CD4-positive, alpha-beta memory T cell (primary cell): ENCODE measurements at regions of chr4 and their contacts with region 1.

Region 1: DNA sequence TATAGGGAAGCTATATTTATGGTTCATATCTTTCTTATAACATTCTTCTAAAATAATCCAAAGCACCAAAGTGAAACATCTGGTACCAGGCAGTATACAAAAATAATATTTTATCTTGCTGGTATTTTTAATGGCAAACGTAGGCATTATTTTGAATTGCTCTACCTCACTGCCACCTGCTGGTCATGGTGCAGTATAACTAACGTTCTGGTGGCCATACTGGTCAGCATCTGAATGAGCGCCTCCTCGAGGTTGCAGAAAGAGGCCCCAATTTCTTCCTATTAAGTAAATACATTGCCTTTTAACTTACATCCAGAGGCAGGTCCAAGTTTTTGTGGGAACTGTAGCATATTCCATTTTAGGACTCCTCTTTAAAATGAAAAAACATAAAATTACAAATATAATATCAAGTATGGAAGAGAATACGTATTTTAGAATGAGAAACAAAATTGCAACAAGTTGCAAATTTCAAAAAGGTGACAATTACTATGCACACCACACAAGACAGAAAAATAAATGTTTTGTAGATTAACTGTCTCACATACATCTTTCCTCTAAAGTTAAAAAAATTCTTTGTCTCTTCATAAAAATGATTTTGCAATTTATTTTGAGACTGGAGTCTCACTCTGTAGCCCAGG is 22.9 kb upstream of the CWH43 start:
- DNase-seq: peak; percentile 75 to 79 (median 76)
- H3K4me3 ChIP-seq: no peak overlapping the region
- H3K4me3 Mint-ChIP-seq: no peak overlapping the region
- H3K27ac ChIP-seq: no peak overlapping the region
- H3K27ac Mint-ChIP-seq: no peak overlapping the region
- H3K4me1 ChIP-seq: no peaks in the 10 kb centered on the region
- H3K4me1 Mint-ChIP-seq: no peaks in the 10 kb centered on the region
- H3K27me3 ChIP-seq: no peaks in the 10 kb centered on the region
- H3K27me3 Mint-ChIP-seq: peaks cover 1 to 4% of the 10 kb centered on the region in 2 donors

Region 2: DNA sequence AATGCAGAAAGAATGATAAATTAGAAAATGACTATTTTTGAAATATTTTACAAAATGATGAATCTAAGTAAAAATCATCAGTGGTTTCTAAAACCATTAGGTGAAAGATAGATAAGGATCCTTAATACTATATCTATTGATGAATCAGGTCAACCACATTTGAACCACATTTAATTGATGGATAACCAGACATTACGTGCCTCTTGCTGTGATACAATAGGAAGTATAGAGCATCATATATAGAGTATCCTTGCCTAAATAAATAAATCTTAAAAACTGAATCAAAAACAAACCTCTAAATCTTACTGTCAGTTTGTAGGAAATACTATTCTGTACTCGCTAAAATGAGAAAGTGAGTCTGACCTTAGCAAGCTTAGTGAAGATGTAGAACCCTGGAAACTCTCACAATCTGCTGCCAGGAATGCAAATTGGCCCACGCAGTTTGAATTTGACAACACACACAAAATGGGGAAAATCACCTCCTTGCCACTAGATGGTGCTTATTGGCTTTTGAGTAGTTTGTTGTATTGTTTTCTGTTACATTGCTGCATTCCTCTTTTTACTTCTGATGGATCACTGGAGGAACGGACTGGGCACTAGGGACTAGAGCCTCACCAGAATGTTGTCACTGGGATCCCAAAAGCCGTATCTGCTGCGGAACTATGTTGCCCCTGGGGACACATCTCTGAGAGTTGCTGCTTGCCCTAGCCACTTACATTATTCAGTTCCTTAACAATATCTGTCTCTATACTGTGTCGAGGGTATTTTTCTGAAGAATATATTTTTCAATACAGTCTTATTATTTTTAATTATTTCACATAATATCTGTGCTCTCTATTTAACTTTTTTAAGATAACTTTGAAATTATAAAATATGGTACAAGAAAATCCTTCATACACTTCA is 647.2 kb before region 1 on chr4:
- CTCF ChIA-PET with region 1: no interaction called
- POLR2A ChIA-PET with region 1: no interaction called
- intact Hi-C with region 1: loop called (anchors 1 kb)
- DNase-seq: peak; percentile 36 to 43 (median 41)
- H3K4me3 ChIP-seq: no peak overlapping the region
- H3K4me3 Mint-ChIP-seq: no peak overlapping the region
- H3K27ac ChIP-seq: no peak overlapping the region
- H3K27ac Mint-ChIP-seq: no peak overlapping the region
- H3K4me1 ChIP-seq: no peaks in the 10 kb centered on the region
- H3K4me1 Mint-ChIP-seq: no peaks in the 10 kb centered on the region
- H3K27me3 ChIP-seq: no peaks in the 10 kb centered on the region
- H3K27me3 Mint-ChIP-seq: no peaks in the 10 kb centered on the region

Region 3: GRCh38 chr4:48681856-48682255 is 281.3 kb before region 1 on chr4:
- CTCF ChIA-PET with region 1: no interaction called
- POLR2A ChIA-PET with region 1: no interaction called
- intact Hi-C with region 1: loop called (anchors 1 kb)
- DNase-seq: peak; percentile 26 to 45 (median 31)
- H3K4me3 ChIP-seq: no peak overlapping the region
- H3K4me3 Mint-ChIP-seq: peak overlapping the region in 1 of 8 donors; percentile 41
- H3K27ac ChIP-seq: no peak overlapping the region
- H3K27ac Mint-ChIP-seq: peak overlapping the region in 5 of 7 donors; percentile 19 to 78 (median 64)
- H3K4me1 ChIP-seq: peaks cover 22% of the 10 kb centered on the region
- H3K4me1 Mint-ChIP-seq: peaks cover 34 to 49% (median 38%) of the 10 kb centered on the region in 4 donors
- H3K27me3 ChIP-seq: no peaks in the 10 kb centered on the region
- H3K27me3 Mint-ChIP-seq: no peaks in the 10 kb centered on the region

Region 4: GRCh38 chr4:48830706-48831531 is 132.2 kb before region 1 on chr4 and contains the start of gene OCIAD1:
- CTCF ChIA-PET with region 1: no interaction called
- POLR2A ChIA-PET with region 1: no interaction called
- intact Hi-C with region 1: loop called (anchors 10 kb)
- DNase-seq: peak; percentile 91 to 99 (median 96)
- H3K4me3 ChIP-seq: peak within 1 kb of the TSS; percentile 92 to 100
- H3K4me3 Mint-ChIP-seq: peak within 1 kb of the TSS; percentile 100
- H3K27ac ChIP-seq: peak within 1 kb of the TSS; percentile 98
- H3K27ac Mint-ChIP-seq: peak within 1 kb of the TSS; percentile 99 to 100 (median 100)
- H3K4me1 ChIP-seq: peaks cover 25% of the 10 kb centered on the region
- H3K4me1 Mint-ChIP-seq: peaks cover 15 to 35% (median 28%) of the 10 kb centered on the region in 4 donors
- H3K27me3 ChIP-seq: no peaks in the 10 kb centered on the region
- H3K27me3 Mint-ChIP-seq: no peaks in the 10 kb centered on the region
- total RNA-seq, gene OCIAD1: 110 to 124 TPM

Region 5: GRCh38 chr4:48858130-48858529 is 105.0 kb before region 1 on chr4:
- CTCF ChIA-PET with region 1: no interaction called
- POLR2A ChIA-PET with region 1: no interaction called
- intact Hi-C with region 1: no loop called
- DNase-seq: no peak
- H3K4me3 ChIP-seq: no peak overlapping the region
- H3K4me3 Mint-ChIP-seq: no peak overlapping the region
- H3K27ac ChIP-seq: no peak overlapping the region
- H3K27ac Mint-ChIP-seq: peak overlapping the region in 2 of 7 donors; percentile 37 to 44
- H3K4me1 ChIP-seq: no peaks in the 10 kb centered on the region
- H3K4me1 Mint-ChIP-seq: no peaks in the 10 kb centered on the region
- H3K27me3 ChIP-seq: no peaks in the 10 kb centered on the region
- H3K27me3 Mint-ChIP-seq: no peaks in the 10 kb centered on the region

Region 6: DNA sequence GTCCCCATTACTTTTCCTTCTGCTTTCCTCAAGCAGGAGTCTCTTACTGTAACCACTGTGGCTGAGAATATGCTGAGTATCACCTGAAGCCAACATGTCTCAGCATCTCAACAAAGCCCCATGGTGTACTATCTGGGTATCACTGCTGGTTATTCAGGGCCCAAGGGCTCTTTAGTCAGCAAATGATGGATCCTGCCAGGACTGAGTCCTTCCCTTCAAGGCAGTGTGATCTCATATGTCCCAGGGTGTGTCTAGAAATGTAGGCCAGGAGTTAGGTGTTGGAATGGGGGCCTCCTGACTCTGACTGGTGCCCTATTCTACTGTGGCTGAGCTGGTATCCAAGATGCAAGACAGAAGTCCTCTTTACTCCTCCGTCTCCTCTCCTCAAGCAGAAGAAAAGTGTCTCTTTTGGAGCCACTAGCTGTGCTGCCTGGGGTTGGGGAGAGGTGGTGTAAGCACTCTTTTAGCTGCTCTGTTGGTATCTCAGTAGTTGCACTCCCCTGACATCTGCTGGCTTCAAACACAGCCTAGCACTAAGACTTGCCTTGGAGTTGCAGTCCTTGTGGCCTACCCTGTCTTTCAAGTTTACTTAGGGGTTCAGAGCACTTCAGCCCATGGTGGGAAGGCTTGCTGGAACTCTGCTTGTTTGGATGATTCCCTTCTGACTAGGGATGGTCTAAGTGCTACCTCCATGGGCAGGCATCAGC is 85.2 kb before region 1 on chr4:
- CTCF ChIA-PET with region 1: no interaction called
- POLR2A ChIA-PET with region 1: no interaction called
- intact Hi-C with region 1: loop called (anchors 1 kb)
- DNase-seq: no peak
- H3K4me3 ChIP-seq: no peak overlapping the region
- H3K4me3 Mint-ChIP-seq: no peak overlapping the region
- H3K27ac ChIP-seq: no peak overlapping the region
- H3K27ac Mint-ChIP-seq: peak overlapping the region in 1 of 7 donors; percentile 73
- H3K4me1 ChIP-seq: no peaks in the 10 kb centered on the region
- H3K4me1 Mint-ChIP-seq: no peaks in the 10 kb centered on the region
- H3K27me3 ChIP-seq: no peaks in the 10 kb centered on the region
- H3K27me3 Mint-ChIP-seq: no peaks in the 10 kb centered on the region

Region 7: GRCh38 chr4:48944756-48945241 is 18.4 kb before region 1 on chr4:
- CTCF ChIA-PET with region 1: interaction called, 18 read pairs
- POLR2A ChIA-PET with region 1: no interaction called
- intact Hi-C with region 1: no loop called
- DNase-seq: peak in 4 of 5 donors; percentile 16 to 28 (median 18)
- H3K4me3 ChIP-seq: no peak overlapping the region
- H3K4me3 Mint-ChIP-seq: peak overlapping the region in 4 of 8 donors; percentile 30 to 72 (median 48)
- H3K27ac ChIP-seq: no peak overlapping the region
- H3K27ac Mint-ChIP-seq: peak overlapping the region in 4 of 7 donors; percentile 23 to 32 (median 27)
- H3K4me1 ChIP-seq: peaks cover 12% of the 10 kb centered on the region
- H3K4me1 Mint-ChIP-seq: peaks cover 7 to 13% (median 10%) of the 10 kb centered on the region in 4 donors
- H3K27me3 ChIP-seq: no peaks in the 10 kb centered on the region
- H3K27me3 Mint-ChIP-seq: no peaks in the 10 kb centered on the region